Esophagus muscularis mucosa (tissue), 4 donors: ENCODE measurements at regions of chr5 and their contacts with region 1.

Region 1: DNA sequence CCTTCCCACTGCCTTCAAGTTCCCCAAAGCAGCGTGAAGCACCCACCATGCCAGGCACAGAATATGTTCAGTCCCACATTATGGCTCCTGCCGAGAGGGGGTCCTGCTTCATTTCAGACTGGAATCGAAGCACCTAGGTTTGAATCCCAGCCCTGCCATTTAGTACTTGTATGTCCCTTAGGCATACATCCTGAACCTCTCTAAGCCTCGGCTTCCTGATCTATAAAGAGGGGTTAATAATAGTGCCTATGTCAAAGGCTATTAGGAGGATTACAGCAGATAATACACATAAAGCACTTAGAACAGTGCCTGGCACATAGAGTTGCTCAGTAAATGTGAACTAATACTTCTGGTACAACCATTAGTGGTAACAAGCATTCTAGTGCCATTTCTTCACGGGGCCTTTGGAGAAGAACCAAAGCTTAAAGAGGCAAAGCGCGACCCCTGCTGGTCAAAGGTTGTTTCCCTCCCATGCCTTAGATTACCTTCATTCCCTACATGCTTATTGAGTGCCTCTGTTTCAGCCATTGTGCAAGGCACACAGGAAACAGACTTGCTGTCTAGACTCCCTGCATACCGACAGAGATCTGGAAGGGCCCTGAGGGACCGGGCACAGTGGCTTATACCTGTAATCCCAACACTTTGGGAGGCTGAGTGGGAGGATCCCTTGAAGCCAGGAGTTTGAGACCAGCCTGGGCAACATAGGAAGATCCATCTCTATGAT is 98.2 kb downstream of the PPARGC1B start:
- DNase-seq: peak; percentile 97
- H3K4me3 ChIP-seq: no peak overlapping the region
- H3K27ac ChIP-seq: peak overlapping the region; percentile 87 to 96 (median 90)
- H3K4me1 ChIP-seq: peaks cover 56 to 58% (median 57%) of the 10 kb centered on the region in 4 donors
- H3K27me3 ChIP-seq: no peaks in the 10 kb centered on the region
- CTCF ChIP-seq: peak; percentile 88 to 93 (median 92)
- EP300 ChIP-seq: no peak
- POLR2A ChIP-seq: no peak

Region 2: GRCh38 chr5:149636851-149637246 is 191.5 kb before region 1 on chr5:
- intact Hi-C with region 1: loop called (anchors 2 kb)
- DNase-seq: no peak
- H3K4me3 ChIP-seq: no peak overlapping the region
- H3K27ac ChIP-seq: no peak overlapping the region
- H3K4me1 ChIP-seq: peaks cover 0 to 22% (median 13%) of the 10 kb centered on the region in 4 donors
- H3K27me3 ChIP-seq: no peaks in the 10 kb centered on the region
- CTCF ChIP-seq: peak; percentile 68 to 89 (median 72)
- EP300 ChIP-seq: no peak
- POLR2A ChIP-seq: no peak

Region 3: DNA sequence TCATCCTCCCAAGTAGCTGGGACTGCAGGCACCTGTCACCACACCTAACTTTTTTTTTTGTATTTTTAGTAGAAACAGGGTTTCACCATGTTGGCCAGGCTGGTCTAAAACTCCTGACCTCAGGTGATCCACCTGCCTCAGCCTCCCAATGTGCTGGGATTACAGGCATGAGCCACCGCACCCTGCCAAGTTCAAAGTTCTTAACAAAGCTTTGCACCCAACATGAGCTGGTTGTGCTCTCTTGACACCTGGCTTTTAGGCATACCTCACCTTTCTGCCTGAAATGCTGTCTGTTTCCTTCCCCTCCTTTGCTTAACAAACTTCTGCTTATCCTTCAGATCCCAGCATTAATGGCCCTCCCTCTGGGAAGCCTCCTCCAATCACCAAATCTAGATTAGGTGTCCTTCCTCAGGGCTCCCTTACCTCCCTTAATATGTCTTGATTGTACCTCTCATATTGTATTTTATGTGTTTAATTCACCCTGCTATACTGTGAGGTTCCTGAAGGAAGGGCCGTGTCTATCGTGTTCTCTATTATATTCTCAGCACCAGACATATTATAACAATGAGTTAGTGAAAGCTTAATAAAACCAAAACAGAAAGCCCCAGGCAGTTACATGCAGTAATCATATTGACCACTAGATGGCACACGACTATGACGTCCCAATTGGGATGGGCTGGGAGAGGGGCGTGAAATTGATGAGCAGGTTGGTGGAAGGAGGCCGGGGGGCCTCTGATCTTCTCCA is 161.1 kb before region 1 on chr5:
- intact Hi-C with region 1: loop called (anchors 5 kb)
- DNase-seq: no peak
- H3K4me3 ChIP-seq: no peak overlapping the region
- H3K27ac ChIP-seq: no peak overlapping the region
- H3K4me1 ChIP-seq: peaks cover 0 to 11% (median 3%) of the 10 kb centered on the region in 4 donors
- H3K27me3 ChIP-seq: no peaks in the 10 kb centered on the region
- CTCF ChIP-seq: peak; percentile 82 to 85 (median 85)
- EP300 ChIP-seq: no peak
- POLR2A ChIP-seq: no peak

Region 4: DNA sequence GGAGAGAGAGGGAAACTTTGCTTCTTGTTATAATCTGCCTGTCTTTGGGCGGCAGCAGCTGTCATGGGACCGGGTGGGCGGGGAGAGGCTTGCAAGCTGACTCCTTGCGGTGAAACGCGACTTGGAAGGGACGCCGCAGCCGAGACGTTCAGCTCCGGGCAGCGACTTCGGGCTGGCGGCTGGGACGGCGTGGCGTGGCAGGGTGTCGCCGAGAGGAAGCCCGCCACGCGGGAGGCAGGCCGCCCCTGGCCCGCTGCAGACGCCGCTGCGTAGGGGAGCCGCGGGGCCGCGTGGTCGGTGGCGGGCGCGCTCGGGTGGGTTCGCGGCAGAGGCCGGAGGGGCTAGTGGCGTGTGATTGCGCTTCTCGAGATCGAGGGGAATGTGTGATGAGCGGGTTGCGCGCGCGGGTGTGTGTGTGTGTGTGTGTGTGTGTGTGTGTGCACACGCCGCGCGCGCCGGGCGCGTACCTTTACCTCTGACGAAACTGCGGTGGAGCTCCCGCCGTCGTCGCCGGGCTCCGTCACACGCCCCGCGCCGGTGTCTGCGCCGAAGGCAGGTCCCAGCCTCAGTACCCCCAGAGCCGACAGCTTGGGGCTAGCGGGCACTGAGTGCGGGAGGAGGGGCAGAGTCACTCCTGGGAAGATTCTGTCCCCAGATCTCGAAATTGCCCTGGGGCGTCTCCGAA is 96.5 kb before region 1 on chr5:
- intact Hi-C with region 1: loop called (anchors 2 kb)
- DNase-seq: peak; percentile 97
- H3K4me3 ChIP-seq: peak overlapping the region; percentile 82 to 100 (median 90)
- H3K27ac ChIP-seq: peak overlapping the region; percentile 93 to 97 (median 96)
- H3K4me1 ChIP-seq: peaks cover 33 to 56% (median 49%) of the 10 kb centered on the region in 4 donors
- H3K27me3 ChIP-seq: no peaks in the 10 kb centered on the region
- CTCF ChIP-seq: no peak
- EP300 ChIP-seq: no peak
- POLR2A ChIP-seq: peak; percentile 17

Region 5: GRCh38 chr5:149775785-149776184 is 52.5 kb before region 1 on chr5:
- intact Hi-C with region 1: no loop called
- DNase-seq: no peak
- H3K4me3 ChIP-seq: no peak overlapping the region
- H3K27ac ChIP-seq: peak overlapping the region; percentile 61 to 91 (median 85)
- H3K4me1 ChIP-seq: peaks cover 88 to 97% (median 94%) of the 10 kb centered on the region in 4 donors
- H3K27me3 ChIP-seq: no peaks in the 10 kb centered on the region
- CTCF ChIP-seq: peak in 2 of 3 experiments; percentile 21 to 27
- EP300 ChIP-seq: no peak
- POLR2A ChIP-seq: no peak